PC-9 (cell line): ENCODE measurements at regions of chr2 and their contacts with region 1.

Region 1: DNA sequence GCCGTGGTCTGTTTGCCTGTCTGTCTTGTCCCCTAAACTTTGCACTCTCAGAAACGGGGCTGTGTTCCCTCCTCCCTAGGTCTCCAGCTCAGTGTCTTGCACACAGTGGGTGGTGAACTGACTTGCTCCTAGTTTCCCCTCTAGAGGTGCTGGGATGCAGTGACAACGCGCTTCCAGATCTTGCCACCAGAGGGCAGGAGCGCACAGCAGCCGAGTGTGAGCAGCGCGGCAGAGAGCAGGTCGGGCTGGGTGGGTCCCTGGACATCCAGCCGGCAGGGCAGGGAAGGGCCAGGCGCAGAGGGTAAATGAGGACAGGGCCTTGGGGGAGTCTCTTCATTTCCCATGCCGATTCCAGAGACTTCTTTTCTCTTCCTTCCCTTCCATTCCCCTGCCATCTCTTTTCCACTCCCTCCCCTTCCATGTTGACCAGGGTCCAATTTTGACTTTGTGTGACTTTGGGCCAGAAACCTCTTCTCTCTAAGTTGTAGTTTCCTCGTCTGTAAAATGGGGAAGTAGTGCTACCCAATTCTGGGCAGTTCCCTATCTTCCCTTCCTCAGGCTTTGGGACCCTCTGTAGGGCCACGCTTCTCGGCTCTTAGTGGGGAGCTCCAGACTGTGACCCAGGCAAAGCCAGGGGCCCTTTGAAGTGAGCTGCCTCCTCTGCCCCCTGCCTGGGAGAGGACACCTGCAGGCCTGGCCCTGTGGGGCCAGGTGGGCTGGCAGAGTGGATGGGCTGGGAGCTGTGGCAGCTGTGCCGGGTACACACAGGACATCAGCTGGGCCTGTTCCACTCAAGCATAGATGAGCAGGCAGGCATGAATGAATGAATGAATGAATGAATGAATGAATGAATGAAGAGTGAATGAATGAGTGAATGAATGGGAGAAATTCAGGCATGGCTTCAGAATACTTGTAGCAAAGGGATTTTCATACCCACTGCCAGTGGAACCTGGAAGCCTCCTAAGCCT is 43.3 kb upstream of the TAF1B start:
- DNase-seq: peak; percentile 83 to 89
- H3K4me3 ChIP-seq: peak overlapping the region; percentile 46; the same call in 1 of the 2 replicates
- H3K27ac ChIP-seq: peak overlapping the region; percentile 95
- H3K4me1 ChIP-seq: peaks cover 86% of the 10 kb centered on the region
- H3K27me3 ChIP-seq: no peaks in the 10 kb centered on the region
- CTCF ChIP-seq: peak; percentile 99

Region 2: GRCh38 chr2:9630749-9631483 is 169.0 kb before region 1 on chr2 and contains the start of gene YWHAQ:
- CTCF ChIA-PET with region 1: no interaction called
- POLR2A ChIA-PET with region 1: no interaction called
- intact Hi-C with region 1: loop called (anchors 2 kb)
- DNase-seq: peak; percentile 93 to 98
- H3K4me3 ChIP-seq: peak within 1 kb of the TSS; percentile 91
- H3K27ac ChIP-seq: peak within 1 kb of the TSS; percentile 72
- H3K4me1 ChIP-seq: peaks cover 36% of the 10 kb centered on the region
- H3K27me3 ChIP-seq: no peaks in the 10 kb centered on the region
- CTCF ChIP-seq: no peak
- total RNA-seq, gene YWHAQ: 353 and 373 TPM in 2 replicates

Region 3: DNA sequence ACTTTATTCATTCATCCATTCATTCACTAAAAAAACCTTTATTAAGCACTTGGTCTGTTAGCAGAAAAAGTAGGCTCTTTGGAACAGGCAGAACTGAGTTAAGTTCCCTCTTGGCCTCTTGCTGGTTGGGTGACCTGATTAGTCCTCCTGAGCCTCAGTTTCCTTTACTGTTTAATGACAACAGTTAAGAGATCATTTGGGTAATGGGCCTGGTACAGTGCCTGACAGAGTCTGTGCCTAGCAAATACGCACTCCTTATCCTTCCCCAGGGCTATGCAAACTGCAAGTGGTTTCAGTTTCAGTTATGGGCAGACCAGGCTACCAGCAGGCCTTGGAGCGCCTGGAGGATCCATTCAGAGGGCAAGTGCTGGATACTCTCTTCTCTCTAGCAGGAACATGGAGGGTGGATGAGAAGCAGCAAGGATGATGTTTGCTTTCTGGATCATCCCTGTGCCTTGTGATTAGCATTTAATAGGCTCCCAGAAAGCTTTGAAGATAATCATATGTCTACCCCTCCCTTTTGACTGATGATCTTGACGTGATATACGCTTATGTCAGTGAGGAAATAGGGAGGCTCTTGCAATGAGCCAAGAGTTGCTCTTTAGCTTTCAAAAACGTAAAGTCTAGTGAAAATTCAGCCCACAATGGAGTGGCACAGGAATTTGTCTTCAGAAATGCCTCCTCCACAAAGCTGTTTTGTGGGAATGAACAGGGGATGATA is 30.9 kb after region 1 on chr2:
- CTCF ChIA-PET with region 1: no interaction called
- POLR2A ChIA-PET with region 1: no interaction called
- intact Hi-C with region 1: loop called (anchors 1 kb)
- DNase-seq: peak; percentile 31 to 53
- H3K4me3 ChIP-seq: peak overlapping the region; percentile 41; the same call in 1 of the 2 replicates
- H3K27ac ChIP-seq: peak overlapping the region; percentile 84
- H3K4me1 ChIP-seq: peaks cover 49% of the 10 kb centered on the region
- H3K27me3 ChIP-seq: no peaks in the 10 kb centered on the region
- CTCF ChIP-seq: no peak

Region 4: DNA sequence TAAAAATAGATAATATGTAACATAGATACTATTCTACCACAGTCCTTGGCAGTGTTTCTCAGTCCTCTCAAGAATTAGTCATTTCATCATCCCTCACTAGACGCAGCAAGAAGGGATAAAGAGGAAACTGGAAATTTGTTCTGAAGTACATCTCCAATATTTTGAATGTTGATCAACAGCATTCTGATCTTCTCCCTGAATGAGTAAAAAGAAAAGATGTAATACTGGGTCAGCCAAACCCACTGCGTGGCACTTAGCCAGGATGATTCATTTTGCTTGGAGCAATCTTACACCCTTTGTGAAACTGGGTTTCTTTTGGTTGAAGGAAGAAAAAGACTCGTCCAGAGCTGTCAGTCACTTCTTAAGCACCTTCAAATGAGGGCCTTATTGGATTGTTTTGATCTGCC is 97.4 kb after region 1 on chr2:
- CTCF ChIA-PET with region 1: interaction called, 3 read pairs
- POLR2A ChIA-PET with region 1: interaction called, 11 read pairs
- intact Hi-C with region 1: no loop called
- DNase-seq: peak; percentile 90 to 99
- H3K4me3 ChIP-seq: no peak overlapping the region
- H3K27ac ChIP-seq: peak overlapping the region; percentile 95
- H3K4me1 ChIP-seq: peaks cover 54% of the 10 kb centered on the region
- H3K27me3 ChIP-seq: no peaks in the 10 kb centered on the region
- CTCF ChIP-seq: no peak

Region 5: GRCh38 chr2:10043906-10044601 is 244.1 kb after region 1 on chr2:
- CTCF ChIA-PET with region 1: no interaction called
- POLR2A ChIA-PET with region 1: no interaction called
- intact Hi-C with region 1: loop called (anchors 1 kb)
- DNase-seq: peak; percentile 84 to 94
- H3K4me3 ChIP-seq: peak overlapping the region; percentile 59; the same call in 1 of the 2 replicates
- H3K27ac ChIP-seq: peak overlapping the region; percentile 70
- H3K4me1 ChIP-seq: peaks cover 5% of the 10 kb centered on the region
- H3K27me3 ChIP-seq: no peaks in the 10 kb centered on the region
- CTCF ChIP-seq: no peak

Region 6: GRCh38 chr2:10434886-10435819 is 635.2 kb after region 1 on chr2:
- CTCF ChIA-PET with region 1: no interaction called
- POLR2A ChIA-PET with region 1: no interaction called
- intact Hi-C with region 1: loop called (anchors 10 kb)
- DNase-seq: peak; percentile 62 to 84
- H3K4me3 ChIP-seq: no peak overlapping the region
- H3K27ac ChIP-seq: no peak overlapping the region
- H3K4me1 ChIP-seq: no peaks in the 10 kb centered on the region; the same call in 1 of the 2 replicates
- H3K27me3 ChIP-seq: no peaks in the 10 kb centered on the region
- CTCF ChIP-seq: peak; percentile 97